ENCODE measurements at regions of chr6 and their contacts with region 1.

Region 1: DNA sequence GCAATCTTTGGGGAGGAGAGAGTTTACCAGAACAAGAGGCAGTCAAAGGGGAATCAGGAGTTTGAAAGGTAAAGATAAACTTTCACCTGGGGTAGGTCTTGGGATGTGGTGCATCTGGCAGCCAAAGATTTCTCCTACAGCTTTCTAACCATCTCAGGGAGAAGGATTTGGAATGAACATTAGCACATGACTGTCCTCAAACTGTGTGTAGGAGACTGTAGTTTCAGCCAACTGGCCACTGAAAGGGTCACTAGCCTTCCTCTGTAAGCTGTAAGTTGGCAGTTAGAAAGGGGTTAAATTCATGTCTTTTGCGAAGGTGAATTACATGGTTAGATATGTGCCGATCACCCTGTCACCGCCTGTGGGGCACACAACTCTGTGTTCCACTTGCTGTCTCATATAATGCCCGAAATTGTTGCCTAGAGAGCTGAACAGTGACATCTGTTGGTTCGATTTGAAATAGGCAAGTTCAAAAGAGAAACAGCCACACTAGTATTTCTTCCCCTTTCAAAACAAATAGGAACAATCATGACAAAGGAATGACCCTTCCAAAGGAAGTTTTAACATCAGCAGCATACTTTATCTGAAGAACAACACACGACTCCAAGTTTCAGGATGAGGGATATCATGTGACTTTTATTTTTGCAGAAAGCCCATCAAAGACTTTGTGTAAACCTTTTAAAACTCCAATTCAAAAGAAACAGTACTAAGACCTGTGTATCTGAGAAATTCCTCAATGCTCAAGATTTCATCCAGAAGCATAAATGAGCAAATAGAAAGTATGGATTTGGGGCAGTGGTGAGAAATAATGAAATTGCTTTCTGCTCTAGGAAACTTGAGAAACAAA is 1.1 kb upstream of the OPN5 start:
- DNase-seq: peak; percentile 59
- H3K4me3 Mint-ChIP-seq: no peak overlapping the region
- H3K27ac Mint-ChIP-seq: no peak overlapping the region
- H3K4me1 Mint-ChIP-seq: peaks cover 14% of the 10 kb centered on the region
- H3K27me3 Mint-ChIP-seq: peaks cover 30% of the 10 kb centered on the region

Region 2: DNA sequence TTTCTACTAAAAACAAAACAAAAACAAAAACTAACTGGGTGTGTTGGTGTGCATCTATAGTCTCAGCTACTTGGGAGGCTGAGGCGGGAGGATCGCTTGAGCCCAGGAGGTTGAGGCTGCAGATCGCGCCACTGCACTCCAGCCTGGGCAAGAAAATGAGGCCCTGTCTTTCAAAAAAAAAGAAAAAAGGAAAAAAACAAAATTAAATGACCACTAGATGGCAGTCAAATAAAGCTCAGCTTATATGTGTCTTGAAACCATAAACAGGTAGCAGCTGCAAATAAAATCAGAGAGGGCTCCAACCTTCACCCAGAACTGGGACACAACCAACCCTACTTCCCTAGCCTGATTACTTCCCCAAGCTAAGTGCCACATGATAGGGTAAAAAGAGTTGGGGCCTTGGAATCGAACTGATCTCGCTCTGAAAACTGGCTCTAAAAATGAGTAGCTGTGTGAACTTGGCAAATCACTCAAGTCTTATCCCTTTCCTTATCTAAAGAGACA is 149.4 kb before region 1 on chr6:
- CTCF ChIA-PET with region 1: interaction called, 17 read pairs
- POLR2A ChIA-PET with region 1: no interaction called
- DNase-seq: peak; percentile 6
- H3K4me3 Mint-ChIP-seq: no peak overlapping the region
- H3K27ac Mint-ChIP-seq: peak overlapping the region; percentile 56
- H3K4me1 Mint-ChIP-seq: peaks cover 21% of the 10 kb centered on the region
- H3K27me3 Mint-ChIP-seq: no peaks in the 10 kb centered on the region

Region 3: DNA sequence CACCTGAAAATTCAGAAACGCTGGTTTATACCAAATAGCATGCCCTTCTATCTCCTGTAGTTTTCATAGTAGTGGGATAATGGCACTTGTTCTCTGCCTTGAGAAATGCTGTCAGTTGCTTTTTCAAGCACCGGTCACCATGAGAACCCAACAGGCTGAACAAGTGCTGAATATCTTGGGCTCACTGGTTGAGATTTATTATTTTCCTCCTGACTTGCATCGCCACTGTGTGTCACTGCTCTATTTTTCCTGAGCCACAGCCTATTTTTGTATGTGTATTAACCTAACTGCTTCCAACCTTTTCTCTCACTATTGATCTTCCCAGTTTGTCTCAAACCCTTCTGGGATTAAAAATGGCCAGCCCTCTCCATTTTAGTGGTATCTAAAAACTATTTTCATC is 73.0 kb after region 1 on chr6:
- CTCF ChIA-PET with region 1: no interaction called
- POLR2A ChIA-PET with region 1: no interaction called
- DNase-seq: no peak
- H3K4me3 Mint-ChIP-seq: no peak overlapping the region
- H3K27ac Mint-ChIP-seq: no peak overlapping the region
- H3K4me1 Mint-ChIP-seq: no peaks in the 10 kb centered on the region
- H3K27me3 Mint-ChIP-seq: peaks cover 6% of the 10 kb centered on the region

Measured in activated CD4-positive, alpha-beta T cell treated with anti-CD3 and anti-CD28 coated beads, Interleukin-2, amount 10 ng/mL, durations not matched to agents 7 days and 5 days (primary cell).